ENCODE measurements at regions of chr6 and their contacts with region 1.

Region 1: DNA sequence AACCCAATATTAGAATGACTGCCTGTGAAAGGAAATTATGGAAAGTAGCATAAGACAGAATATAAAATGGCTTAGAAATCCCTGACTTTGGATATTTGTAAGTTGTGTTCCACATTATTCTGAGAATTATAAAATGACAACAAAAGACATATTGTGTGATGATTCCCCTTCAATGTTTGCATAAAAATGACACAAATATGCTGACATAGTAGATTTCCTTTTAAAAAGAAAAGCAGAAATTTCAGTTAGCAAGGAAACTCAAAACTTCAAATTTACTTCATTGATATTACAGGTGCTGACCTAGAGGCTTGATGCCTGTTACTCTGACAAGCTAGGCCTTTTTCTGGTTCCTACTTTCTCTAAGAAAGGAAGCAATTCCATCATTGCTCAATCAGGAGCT is 816.9 kb upstream of the HS3ST5 start:
- DNase-seq: no peak
- H3K4me3 ChIP-seq: no peak overlapping the region
- H3K27ac ChIP-seq: no peak overlapping the region
- H3K4me1 ChIP-seq: no peaks in the 10 kb centered on the region
- H3K27me3 ChIP-seq: no peaks in the 10 kb centered on the region
- CTCF ChIP-seq: no peak
- EP300 ChIP-seq: no peak
- POLR2A ChIP-seq: no peak

Region 2: DNA sequence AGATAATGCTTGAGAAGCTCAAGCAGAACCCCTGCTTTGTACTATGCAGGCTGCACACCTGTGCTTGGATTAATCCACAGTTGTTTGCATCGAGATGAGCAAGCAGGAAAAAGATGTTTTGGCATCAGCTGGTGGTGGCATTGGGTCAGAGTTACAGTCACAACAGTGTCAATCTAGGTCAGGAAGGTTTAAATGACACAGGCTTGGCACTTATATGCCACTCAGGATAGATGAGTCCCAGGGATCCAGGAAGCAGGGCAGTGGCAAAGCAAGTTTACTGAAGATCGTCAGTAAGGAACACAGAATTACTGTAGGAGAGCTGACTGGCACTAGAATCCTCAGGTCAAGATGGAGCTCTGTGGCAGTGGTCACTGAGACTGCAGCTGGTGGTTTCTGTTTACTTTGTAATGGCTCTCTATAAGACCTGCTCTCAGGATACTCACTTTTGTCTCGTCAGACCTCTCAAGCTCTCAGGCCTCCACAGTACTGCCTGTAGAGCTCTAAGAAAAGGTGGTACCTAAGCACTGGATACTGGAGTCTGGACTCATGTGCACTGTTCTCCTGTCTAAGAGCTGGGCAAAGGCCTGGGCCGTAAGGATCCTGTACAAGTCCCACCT is 706.8 kb before region 1 on chr6:
- intact Hi-C with region 1: no loop called
- DNase-seq: no peak
- H3K4me3 ChIP-seq: no peak overlapping the region
- H3K27ac ChIP-seq: no peak overlapping the region
- H3K4me1 ChIP-seq: no peaks in the 10 kb centered on the region
- H3K27me3 ChIP-seq: no peaks in the 10 kb centered on the region
- CTCF ChIP-seq: no peak
- EP300 ChIP-seq: no peak
- POLR2A ChIP-seq: no peak

Region 3: DNA sequence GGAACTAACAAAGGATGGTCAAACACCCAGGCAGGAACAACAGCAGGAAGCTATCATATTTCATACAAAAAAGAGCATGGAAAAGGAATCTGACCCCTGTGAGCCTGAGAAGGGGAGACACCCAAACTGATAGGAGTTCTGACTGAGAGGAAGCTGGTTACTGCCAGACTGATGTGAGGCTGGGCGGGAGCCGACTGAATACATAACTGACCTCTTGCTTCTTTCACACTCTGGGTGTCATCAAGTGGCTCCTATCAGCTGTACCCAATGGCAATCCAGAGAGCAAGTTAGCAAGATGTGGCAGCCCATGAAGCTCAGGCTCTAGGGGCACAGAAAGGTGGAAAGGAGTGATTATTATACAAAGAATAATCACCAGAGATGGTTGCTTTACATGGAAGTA is 21.8 kb before region 1 on chr6:
- intact Hi-C with region 1: loop called in 1 of 4 experiments (anchors 1 kb)
- DNase-seq: no peak
- H3K4me3 ChIP-seq: no peak overlapping the region
- H3K27ac ChIP-seq: no peak overlapping the region
- H3K4me1 ChIP-seq: no peaks in the 10 kb centered on the region
- H3K27me3 ChIP-seq: no peaks in the 10 kb centered on the region
- CTCF ChIP-seq: no peak
- EP300 ChIP-seq: no peak
- POLR2A ChIP-seq: no peak

Region 4: DNA sequence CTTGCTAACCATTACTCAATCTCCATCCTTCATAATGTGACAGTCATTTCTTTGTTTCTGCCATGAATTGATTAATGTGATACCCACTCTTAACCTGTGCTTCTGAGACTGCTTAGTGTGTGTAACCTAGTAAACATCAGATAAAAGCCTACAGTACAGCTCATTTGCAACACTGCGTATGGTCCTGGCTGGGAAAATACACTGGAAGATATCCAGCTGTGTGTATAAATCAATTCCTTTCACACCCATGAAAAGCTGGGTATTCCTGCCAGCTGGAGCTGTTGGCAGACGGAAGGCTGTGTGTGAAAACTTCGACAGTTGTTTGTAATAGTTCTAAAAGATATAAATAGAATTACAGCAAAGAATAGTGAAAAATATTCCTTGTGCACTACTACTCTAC is 391.8 kb after region 1 on chr6:
- intact Hi-C with region 1: no loop called
- DNase-seq: no peak
- H3K4me3 ChIP-seq: no peak overlapping the region
- H3K27ac ChIP-seq: no peak overlapping the region
- H3K4me1 ChIP-seq: no peaks in the 10 kb centered on the region
- H3K27me3 ChIP-seq: no peaks in the 10 kb centered on the region
- CTCF ChIP-seq: no peak
- EP300 ChIP-seq: no peak
- POLR2A ChIP-seq: no peak

Measured in ovary (tissue), 10 donors.